ENCODE measurements at regions of chr1 and their contacts with region 1.

Region 1: GRCh38 chr1:38586993-38587646 is 272.5 kb downstream of the RRAGC start:
- DNase-seq: peak in 4 of 5 donors; percentile 26 to 39 (median 36)
- H3K4me3 ChIP-seq: no peak overlapping the region
- H3K4me3 Mint-ChIP-seq: peak overlapping the region in 1 of 8 donors; percentile 39
- H3K27ac ChIP-seq: no peak overlapping the region
- H3K27ac Mint-ChIP-seq: no peak overlapping the region
- H3K4me1 ChIP-seq: no peaks in the 10 kb centered on the region
- H3K4me1 Mint-ChIP-seq: peaks cover 0 to 8% (median 2%) of the 10 kb centered on the region in 4 donors
- H3K27me3 ChIP-seq: no peaks in the 10 kb centered on the region
- H3K27me3 Mint-ChIP-seq: peaks cover 5 to 13% of the 10 kb centered on the region in 2 donors

Region 2: DNA sequence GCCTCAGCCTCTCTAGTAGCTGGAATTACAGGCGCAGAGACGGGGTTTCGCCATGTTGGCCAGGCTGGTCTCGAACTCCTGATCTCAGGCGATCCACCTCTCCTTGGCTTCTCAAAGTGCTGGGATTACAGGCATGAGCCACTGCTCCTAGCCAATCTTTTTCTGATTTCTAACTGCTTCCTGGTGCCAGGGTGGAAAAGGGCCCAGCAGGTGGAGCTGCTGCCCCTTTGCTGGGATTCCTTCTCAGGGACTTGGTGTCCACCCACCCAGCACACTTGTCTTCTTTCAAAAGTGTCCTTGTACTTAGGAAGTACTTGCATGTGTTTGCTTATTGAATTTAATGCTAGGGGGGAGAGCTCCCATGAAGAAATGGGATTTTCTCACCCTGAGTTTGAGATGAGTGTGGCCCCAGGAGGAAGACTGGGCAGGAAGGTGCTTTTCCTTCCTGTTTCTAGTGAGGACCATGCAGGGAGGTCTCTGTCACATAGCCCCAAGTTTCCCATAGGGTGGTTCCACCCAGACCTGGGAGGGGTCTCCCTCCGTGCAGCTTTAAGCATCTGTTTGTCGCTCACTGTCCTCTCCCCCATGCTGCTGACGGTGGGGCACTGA is 560.4 kb before region 1 on chr1:
- CTCF ChIA-PET with region 1: no interaction called
- POLR2A ChIA-PET with region 1: no interaction called
- intact Hi-C with region 1: loop called (anchors 1 kb)
- DNase-seq: peak in 1 of 5 donors; percentile 46
- H3K4me3 ChIP-seq: no peak overlapping the region
- H3K4me3 Mint-ChIP-seq: no peak overlapping the region
- H3K27ac ChIP-seq: no peak overlapping the region
- H3K27ac Mint-ChIP-seq: peak overlapping the region in 4 of 7 donors; percentile 34 to 87 (median 61)
- H3K4me1 ChIP-seq: peaks cover 43% of the 10 kb centered on the region
- H3K4me1 Mint-ChIP-seq: peaks cover 16 to 47% (median 29%) of the 10 kb centered on the region in 4 donors
- H3K27me3 ChIP-seq: no peaks in the 10 kb centered on the region
- H3K27me3 Mint-ChIP-seq: no peaks in the 10 kb centered on the region

Region 3: GRCh38 chr1:38360807-38361206 is 226.3 kb before region 1 on chr1:
- CTCF ChIA-PET with region 1: interaction called, 3 read pairs
- POLR2A ChIA-PET with region 1: no interaction called
- intact Hi-C with region 1: loop called (anchors 5 kb)
- DNase-seq: peak in 1 of 5 donors; percentile 0
- H3K4me3 ChIP-seq: no peak overlapping the region
- H3K4me3 Mint-ChIP-seq: no peak overlapping the region
- H3K27ac ChIP-seq: no peak overlapping the region
- H3K27ac Mint-ChIP-seq: no peak overlapping the region
- H3K4me1 ChIP-seq: no peaks in the 10 kb centered on the region
- H3K4me1 Mint-ChIP-seq: no peaks in the 10 kb centered on the region
- H3K27me3 ChIP-seq: no peaks in the 10 kb centered on the region
- H3K27me3 Mint-ChIP-seq: peaks cover 7 to 13% of the 10 kb centered on the region in 2 donors

Region 4: GRCh38 chr1:38489844-38490270 is 97.3 kb before region 1 on chr1:
- CTCF ChIA-PET with region 1: interaction called, 7 read pairs
- POLR2A ChIA-PET with region 1: no interaction called
- intact Hi-C with region 1: loop called (anchors 1 kb)
- DNase-seq: peak in 4 of 5 donors; percentile 3 to 22 (median 15)
- H3K4me3 ChIP-seq: no peak overlapping the region
- H3K4me3 Mint-ChIP-seq: no peak overlapping the region
- H3K27ac ChIP-seq: no peak overlapping the region
- H3K27ac Mint-ChIP-seq: no peak overlapping the region
- H3K4me1 ChIP-seq: no peaks in the 10 kb centered on the region
- H3K4me1 Mint-ChIP-seq: no peaks in the 10 kb centered on the region
- H3K27me3 ChIP-seq: no peaks in the 10 kb centered on the region
- H3K27me3 Mint-ChIP-seq: peaks cover 7 to 27% of the 10 kb centered on the region in 2 donors

Region 5: GRCh38 chr1:38541223-38541622 is 45.9 kb before region 1 on chr1:
- CTCF ChIA-PET with region 1: no interaction called
- POLR2A ChIA-PET with region 1: no interaction called
- intact Hi-C with region 1: no loop called
- DNase-seq: no peak
- H3K4me3 ChIP-seq: no peak overlapping the region
- H3K4me3 Mint-ChIP-seq: no peak overlapping the region
- H3K27ac ChIP-seq: no peak overlapping the region
- H3K27ac Mint-ChIP-seq: no peak overlapping the region
- H3K4me1 ChIP-seq: no peaks in the 10 kb centered on the region
- H3K4me1 Mint-ChIP-seq: no peaks in the 10 kb centered on the region
- H3K27me3 ChIP-seq: no peaks in the 10 kb centered on the region
- H3K27me3 Mint-ChIP-seq: peaks cover 17 to 23% of the 10 kb centered on the region in 2 donors

Region 6: GRCh38 chr1:38640371-38640770 is 53.3 kb after region 1 on chr1:
- CTCF ChIA-PET with region 1: no interaction called
- POLR2A ChIA-PET with region 1: no interaction called
- intact Hi-C with region 1: no loop called
- DNase-seq: no peak
- H3K4me3 ChIP-seq: no peak overlapping the region
- H3K4me3 Mint-ChIP-seq: no peak overlapping the region
- H3K27ac ChIP-seq: no peak overlapping the region
- H3K27ac Mint-ChIP-seq: no peak overlapping the region
- H3K4me1 ChIP-seq: no peaks in the 10 kb centered on the region
- H3K4me1 Mint-ChIP-seq: no peaks in the 10 kb centered on the region
- H3K27me3 ChIP-seq: peaks cover 3% of the 10 kb centered on the region
- H3K27me3 Mint-ChIP-seq: peaks cover 22 to 31% of the 10 kb centered on the region in 2 donors